HepG2 (cell line): ENCODE measurements at regions of chr13 and their contacts with region 1.

Region 1: GRCh38 chr13:35283854-35284253 is 192.6 kb downstream of the MAB21L1 start:
- DNase-seq: peak; percentile 80
- ATAC-seq: peak; percentile 77
- H3K4me3 ChIP-seq: no peak overlapping the region
- H3K27ac ChIP-seq: no peak overlapping the region
- H3K4me1 ChIP-seq: peaks cover 33% of the 10 kb centered on the region
- H3K27me3 ChIP-seq: no peaks in the 10 kb centered on the region
- CTCF ChIP-seq: no peak
- EP300 ChIP-seq: peak in 1 of 2 experiments; percentile 82; a peak in 2 of 4 replicates
- POLR2A ChIP-seq: no peak
- RAD21 ChIP-seq: no peak

Region 2: DNA sequence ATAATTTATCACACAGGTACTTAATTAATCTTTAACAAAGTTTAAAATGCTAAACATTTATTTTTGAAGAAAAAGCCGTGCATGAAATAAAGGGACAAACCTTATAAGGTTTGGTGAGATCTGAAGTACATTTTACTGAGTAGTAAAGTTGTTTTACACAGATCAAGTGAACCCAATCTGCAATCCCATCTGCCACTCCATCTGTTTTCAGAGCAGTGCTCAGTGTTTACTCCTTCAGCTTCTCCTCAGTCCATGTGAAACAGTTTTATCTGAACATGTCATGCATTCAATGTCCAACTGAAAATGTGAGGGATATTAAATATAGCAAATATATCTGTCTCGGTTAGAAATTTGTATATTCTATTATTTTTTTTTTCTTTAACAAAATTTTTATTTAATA is 25.9 kb after region 1 on chr13:
- CTCF ChIA-PET with region 1: no interaction called
- POLR2A ChIA-PET with region 1: no interaction called
- in situ Hi-C with region 1: no loop called
- intact Hi-C with region 1: no loop called
- DNase-seq: no peak
- ATAC-seq: no peak
- H3K4me3 ChIP-seq: no peak overlapping the region
- H3K27ac ChIP-seq: no peak overlapping the region
- H3K4me1 ChIP-seq: no peaks in the 10 kb centered on the region
- H3K27me3 ChIP-seq: no peaks in the 10 kb centered on the region; a peak in 1 of 5 replicates
- CTCF ChIP-seq: no peak
- EP300 ChIP-seq: no peak
- POLR2A ChIP-seq: no peak
- RAD21 ChIP-seq: no peak

Region 3: DNA sequence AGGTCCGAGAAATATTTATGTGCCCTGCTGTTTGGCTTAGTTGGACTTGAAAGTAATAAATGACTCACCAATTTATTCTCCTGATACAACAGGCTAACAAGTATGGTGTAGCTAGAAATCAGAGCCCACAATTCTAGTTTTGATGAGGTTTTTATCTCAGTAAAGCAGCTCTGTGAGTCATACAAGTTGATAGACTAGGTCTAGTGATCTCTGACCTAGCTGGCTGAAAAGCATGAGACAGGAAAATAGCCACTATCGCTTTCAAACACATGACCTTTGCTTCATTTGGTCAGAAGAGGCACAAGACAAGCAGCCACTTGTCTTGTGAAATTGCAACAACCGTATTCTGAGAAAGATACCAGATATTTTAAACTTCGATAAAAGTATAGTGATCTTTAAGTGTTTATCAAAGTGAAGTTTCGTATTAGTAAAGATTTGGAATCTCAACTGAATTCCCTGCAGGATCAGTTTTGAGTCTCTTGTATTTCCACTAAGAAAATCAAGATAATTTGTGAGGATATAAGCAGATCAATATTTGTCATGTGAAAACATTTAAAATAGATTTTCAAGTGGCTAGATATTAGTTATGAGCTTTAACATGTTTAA is 65.9 kb after region 1 on chr13:
- CTCF ChIA-PET with region 1: no interaction called
- POLR2A ChIA-PET with region 1: no interaction called
- in situ Hi-C with region 1: no loop called
- intact Hi-C with region 1: loop called (anchors 5 kb)
- DNase-seq: peak; percentile 92
- ATAC-seq: peak; percentile 99
- H3K4me3 ChIP-seq: peak overlapping the region in 1 of 3 experiments; percentile 13; a peak in 2 of 6 replicates
- H3K27ac ChIP-seq: peak overlapping the region; percentile 74
- H3K4me1 ChIP-seq: peaks cover 52% of the 10 kb centered on the region
- H3K27me3 ChIP-seq: no peaks in the 10 kb centered on the region
- CTCF ChIP-seq: no peak
- EP300 ChIP-seq: peak in 1 of 2 experiments; percentile 80; a peak in 2 of 4 replicates
- POLR2A ChIP-seq: no peak
- RAD21 ChIP-seq: no peak

Region 4: GRCh38 chr13:35388441-35389355 is 104.8 kb after region 1 on chr13:
- CTCF ChIA-PET with region 1: no interaction called
- POLR2A ChIA-PET with region 1: no interaction called
- in situ Hi-C with region 1: no loop called
- intact Hi-C with region 1: loop called (anchors 5 kb)
- DNase-seq: no peak
- ATAC-seq: 0 out of 3 replicates have a peak, but pooled peaks have one; percentile 35
- H3K4me3 ChIP-seq: no peak overlapping the region
- H3K27ac ChIP-seq: no peak overlapping the region
- H3K4me1 ChIP-seq: peaks cover 12% of the 10 kb centered on the region; the same call in 1 of the 2 replicates
- H3K27me3 ChIP-seq: no peaks in the 10 kb centered on the region
- CTCF ChIP-seq: no peak
- EP300 ChIP-seq: no peak
- POLR2A ChIP-seq: no peak
- RAD21 ChIP-seq: no peak